Activated CD8-positive, alpha-beta T cell treated with anti-CD3 and anti-CD28 coated beads, Interleukin-2, amount 10 ng/mL, durations not matched to agents 7 days and 5 days (primary cell): ENCODE measurements at regions of chr12 and their contacts with region 1.

Region 1: GRCh38 chr12:47216150-47216677 is 136.5 kb upstream of the AMIGO2 start:
- DNase-seq: peak; percentile 92
- ATAC-seq: peak; percentile 54
- H3K4me3 Mint-ChIP-seq: peak overlapping the region; percentile 83
- H3K27ac Mint-ChIP-seq: peak overlapping the region; percentile 93
- H3K4me1 Mint-ChIP-seq: peaks cover 27% of the 10 kb centered on the region
- H3K27me3 Mint-ChIP-seq: no peaks in the 10 kb centered on the region

Region 2: DNA sequence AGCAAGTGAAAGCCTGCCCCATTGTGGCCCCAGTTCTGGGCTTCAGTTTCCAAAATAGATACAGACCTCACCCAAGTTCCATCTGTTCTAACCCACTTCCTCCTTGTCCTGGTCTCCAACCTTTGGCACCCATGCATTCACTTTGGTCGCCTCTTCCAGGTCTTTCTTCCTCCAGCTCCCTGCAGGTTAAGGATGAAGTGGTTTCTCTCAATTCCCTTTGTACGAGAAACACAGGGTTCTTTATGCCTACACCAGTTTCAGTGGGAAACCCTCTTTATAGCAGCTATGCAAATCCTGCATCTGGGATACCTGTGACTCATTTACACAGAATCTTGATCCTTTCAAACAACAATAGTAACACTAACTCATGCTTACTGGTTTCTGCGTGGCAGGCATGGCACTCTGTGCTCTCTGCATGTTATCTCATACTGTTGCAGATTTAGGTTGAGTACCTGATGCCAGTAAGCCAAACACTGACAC is 25.9 kb before region 1 on chr12:
- CTCF ChIA-PET with region 1: interaction called, 15 read pairs
- POLR2A ChIA-PET with region 1: interaction called, 44 read pairs
- DNase-seq: no peak
- ATAC-seq: no peak
- H3K4me3 Mint-ChIP-seq: no peak overlapping the region
- H3K27ac Mint-ChIP-seq: peak overlapping the region; percentile 66
- H3K4me1 Mint-ChIP-seq: peaks cover 70% of the 10 kb centered on the region
- H3K27me3 Mint-ChIP-seq: no peaks in the 10 kb centered on the region

Region 3: GRCh38 chr12:47302111-47302671 is 86.0 kb after region 1 on chr12:
- CTCF ChIA-PET with region 1: interaction called, 21 read pairs
- POLR2A ChIA-PET with region 1: interaction called, 26 read pairs
- DNase-seq: no peak
- ATAC-seq: peak; percentile 66
- H3K4me3 Mint-ChIP-seq: peak overlapping the region; percentile 5
- H3K27ac Mint-ChIP-seq: peak overlapping the region; percentile 75
- H3K4me1 Mint-ChIP-seq: peaks cover 60% of the 10 kb centered on the region
- H3K27me3 Mint-ChIP-seq: no peaks in the 10 kb centered on the region

Region 4: GRCh38 chr12:47356129-47356700 is 140.0 kb after region 1 on chr12:
- CTCF ChIA-PET with region 1: interaction called, 4 read pairs
- POLR2A ChIA-PET with region 1: interaction called, 129 read pairs
- DNase-seq: peak; percentile 31
- ATAC-seq: no peak
- H3K4me3 Mint-ChIP-seq: peak overlapping the region; percentile 59
- H3K27ac Mint-ChIP-seq: peak overlapping the region; percentile 88
- H3K4me1 Mint-ChIP-seq: peaks cover 74% of the 10 kb centered on the region
- H3K27me3 Mint-ChIP-seq: no peaks in the 10 kb centered on the region